ENCODE measurements at regions of chr13 and their contacts with region 1.

Region 1: DNA sequence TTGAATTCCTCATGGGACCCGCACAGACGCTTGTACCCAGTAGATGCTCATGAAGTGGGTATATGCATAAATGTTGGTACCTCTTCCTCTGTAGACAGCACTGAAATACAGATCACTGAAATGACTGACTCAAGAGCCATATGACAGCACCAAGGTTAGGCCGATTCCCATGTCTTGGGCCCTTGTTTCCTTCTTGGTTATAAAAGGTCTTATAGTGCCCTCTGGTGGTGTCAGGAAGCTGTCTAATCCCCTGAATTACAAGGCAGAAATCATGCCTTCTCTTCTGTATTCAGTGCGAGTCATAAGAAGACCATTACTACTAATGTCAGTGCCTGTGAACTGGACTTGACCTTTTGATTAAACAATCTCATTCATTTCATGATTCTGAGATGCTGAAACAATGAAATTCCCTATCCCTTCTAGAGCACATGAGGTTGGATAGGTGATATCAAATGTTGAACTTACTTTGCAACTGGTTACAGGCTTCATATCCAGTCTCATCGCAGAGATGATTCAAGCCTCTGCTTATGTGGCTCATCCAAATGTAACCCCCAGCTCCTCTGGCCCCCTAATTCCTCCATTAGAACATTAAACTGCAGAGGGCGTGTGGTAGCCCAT is 59.7 kb downstream of the SPATA13 start:
- DNase-seq: peak in 2 of 10 donors; percentile 33 to 57

Region 2: GRCh38 chr13:23466144-23467002 is 753.8 kb before region 1 on chr13:
- intact Hi-C with region 1: loop called (anchors 10 kb)
- DNase-seq: peak; percentile 51 to 96 (median 76)

Region 3: DNA sequence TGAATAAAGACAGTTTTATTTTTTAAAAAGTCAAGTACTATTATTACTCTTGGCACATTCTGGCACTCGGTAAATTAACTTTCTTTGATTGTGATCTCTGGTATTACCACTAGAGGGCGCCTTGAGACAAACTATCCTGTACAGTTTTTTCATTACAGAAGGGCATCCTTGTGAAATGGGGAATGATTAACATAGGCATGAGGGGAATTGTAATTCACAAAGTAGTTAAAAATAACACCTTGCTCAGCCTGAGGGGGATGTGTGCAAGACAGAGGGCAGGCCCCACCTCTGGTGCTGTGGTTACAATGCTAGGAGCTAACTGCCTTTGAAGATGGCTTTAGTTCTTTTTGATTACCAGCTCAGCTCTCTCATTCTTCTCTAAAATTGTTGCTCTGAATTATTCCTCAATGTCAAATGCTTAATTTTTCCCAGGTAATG is 298.7 kb before region 1 on chr13:
- intact Hi-C with region 1: loop called (anchors 2 kb)
- DNase-seq: no peak

Region 4: DNA sequence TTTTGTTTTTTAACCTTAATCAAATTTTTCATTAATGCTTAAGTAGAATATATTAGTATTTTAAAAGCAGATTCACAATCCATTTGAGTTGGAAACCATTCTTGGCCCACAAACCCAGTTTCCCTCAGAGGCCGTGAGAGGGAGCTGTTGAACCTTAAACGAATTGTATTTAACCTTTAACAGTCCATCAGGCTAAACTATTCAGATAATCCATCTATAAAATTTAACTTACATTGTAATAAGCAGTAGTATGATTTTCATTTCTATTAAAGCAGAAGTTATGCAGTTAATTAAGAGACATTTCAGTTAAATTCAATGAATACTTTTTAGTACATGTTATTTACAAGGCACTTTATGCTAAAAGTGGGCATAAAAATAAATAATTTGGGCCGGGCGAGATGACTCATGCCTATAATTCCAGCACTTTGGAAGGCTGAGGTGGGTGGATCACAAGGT is 199.8 kb before region 1 on chr13:
- intact Hi-C with region 1: loop called (anchors 1 kb)
- DNase-seq: peak in 7 of 10 donors; percentile 50 to 91 (median 64)

Region 5: DNA sequence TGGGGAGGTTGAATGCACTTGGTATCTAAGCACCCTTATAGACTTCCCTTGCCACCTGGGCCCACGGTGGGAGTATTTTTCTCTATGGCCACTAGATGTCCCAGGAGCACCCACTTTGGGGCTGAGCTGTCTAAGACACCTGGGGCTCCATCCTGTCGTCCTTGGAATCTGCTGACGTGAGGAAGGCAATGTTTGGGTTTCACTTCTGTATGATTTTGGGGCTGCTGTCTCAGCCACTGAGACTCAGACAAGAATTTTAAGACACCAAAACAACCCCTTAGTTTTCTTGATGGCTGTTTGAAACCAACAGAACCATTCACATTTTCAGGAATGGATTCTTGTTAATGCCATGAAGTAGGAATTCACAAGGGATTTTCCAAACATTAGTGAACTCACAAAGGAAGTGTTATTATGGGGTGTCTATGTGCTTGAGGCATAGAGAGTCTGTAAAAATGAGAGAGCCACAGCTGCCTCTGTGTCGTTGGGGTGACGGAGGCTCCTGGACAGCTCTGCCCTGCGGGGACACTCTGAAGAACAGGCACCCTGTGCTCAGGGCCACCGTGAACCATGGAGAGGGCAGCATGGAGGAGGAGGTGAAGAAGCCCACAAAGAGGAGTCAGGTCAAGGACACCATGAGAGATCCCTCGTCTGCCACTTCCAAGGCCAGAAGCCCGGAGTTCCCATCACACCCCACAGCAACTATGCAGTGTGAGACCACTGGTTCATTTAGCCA is 166.5 kb before region 1 on chr13:
- intact Hi-C with region 1: loop called (anchors 2 kb)
- DNase-seq: peak in 8 of 10 donors; percentile 62 to 93 (median 70)

Region 6: GRCh38 chr13:24083722-24084421 is 136.3 kb before region 1 on chr13:
- intact Hi-C with region 1: no loop called
- DNase-seq: peak in 2 of 10 donors; percentile 39 to 43

Region 7: DNA sequence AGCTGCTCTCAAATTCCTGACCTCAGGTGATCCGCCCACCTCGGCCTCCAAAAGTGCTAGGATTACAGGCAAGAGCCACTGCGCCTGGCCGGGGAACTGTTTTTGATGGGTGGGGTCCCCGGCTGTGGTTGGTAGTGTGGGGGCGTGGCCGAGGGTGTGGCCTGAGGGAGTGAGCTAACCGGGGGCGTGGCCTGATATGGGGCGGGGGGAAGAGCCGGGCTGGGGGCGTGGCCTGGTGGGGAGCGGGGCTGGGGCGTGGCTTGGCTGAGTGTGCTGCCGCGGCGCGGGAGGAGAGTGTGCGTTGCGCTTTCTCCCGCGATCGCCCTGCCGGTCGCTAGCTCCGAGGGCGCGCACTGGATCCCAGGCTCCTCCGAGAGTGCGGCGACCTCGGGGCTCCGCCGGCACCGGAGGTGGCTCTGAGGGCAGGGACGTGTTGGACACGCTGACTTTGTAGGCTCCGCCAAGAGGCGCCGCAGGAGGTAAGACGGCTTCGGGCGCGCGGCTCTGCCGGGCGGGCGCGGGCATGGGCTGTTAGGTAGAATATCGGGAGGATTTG is 59.7 kb before region 1 on chr13 and contains the start of gene SPATA13:
- intact Hi-C with region 1: loop called (anchors 5 kb)
- DNase-seq: peak; percentile 81 to 98 (median 94)

Region 8: GRCh38 chr13:24280720-24281119 is 60.5 kb after region 1 on chr13:
- intact Hi-C with region 1: no loop called
- DNase-seq: peak in 1 of 10 donors; percentile 40

Region 9: GRCh38 chr13:24313439-24313838 is 93.2 kb after region 1 on chr13:
- intact Hi-C with region 1: no loop called
- DNase-seq: no peak

Measured in posterior cingulate gyrus (tissue), 11 donors.